Mammary epithelial cell (primary cell): ENCODE measurements at regions of chr4 and their contacts with region 1.

Region 1: DNA sequence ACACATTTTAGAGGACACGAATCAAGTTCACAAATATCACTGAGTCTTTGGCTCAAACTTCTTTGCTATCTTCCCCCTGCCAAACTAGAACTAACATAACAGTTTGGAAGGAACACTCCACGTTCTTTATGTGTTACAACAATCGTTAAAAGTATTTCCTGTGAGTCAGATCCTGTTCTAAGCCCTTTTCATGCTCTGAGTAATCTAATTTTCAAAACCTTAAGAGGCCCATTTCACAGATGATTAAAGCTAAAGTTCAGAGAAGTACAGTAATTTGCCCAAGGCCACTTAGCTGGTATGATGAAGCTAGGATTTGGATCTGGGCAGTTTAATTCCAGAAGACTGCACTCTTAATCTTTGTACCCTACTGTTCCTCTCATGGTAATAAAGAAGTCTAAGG is 854.4 kb upstream of the INTU start:
- DNase-seq: peak; percentile 60
- H3K4me3 ChIP-seq: peak overlapping the region in 2 of 3 experiments; percentile 45 to 60
- H3K27ac ChIP-seq: peak overlapping the region; percentile 83
- H3K4me1 ChIP-seq: peaks cover 5% of the 10 kb centered on the region
- H3K27me3 ChIP-seq: no peaks in the 10 kb centered on the region
- CTCF ChIP-seq: no peak

Region 2: GRCh38 chr4:126627255-126627654 is 151.1 kb before region 1 on chr4:
- CTCF ChIA-PET with region 1: no interaction called
- dilution Hi-C with region 1: no loop called
- in situ Hi-C with region 1: no loop called
- intact Hi-C with region 1: loop called (anchors 5 kb)
- DNase-seq: peak; percentile 12
- H3K4me3 ChIP-seq: no peak overlapping the region
- H3K27ac ChIP-seq: no peak overlapping the region
- H3K4me1 ChIP-seq: no peaks in the 10 kb centered on the region
- H3K27me3 ChIP-seq: no peaks in the 10 kb centered on the region
- CTCF ChIP-seq: peak; percentile 54 to 74

Region 3: GRCh38 chr4:126850286-126850685 is 71.9 kb after region 1 on chr4:
- CTCF ChIA-PET with region 1: no interaction called
- dilution Hi-C with region 1: no loop called
- in situ Hi-C with region 1: no loop called
- intact Hi-C with region 1: loop called (anchors 5 kb)
- DNase-seq: peak; percentile 97
- H3K4me3 ChIP-seq: no peak overlapping the region
- H3K27ac ChIP-seq: peak overlapping the region; percentile 28
- H3K4me1 ChIP-seq: peaks cover 21% of the 10 kb centered on the region
- H3K27me3 ChIP-seq: no peaks in the 10 kb centered on the region
- CTCF ChIP-seq: no peak

Region 4: GRCh38 chr4:126969360-126970235 is 191.2 kb after region 1 on chr4:
- CTCF ChIA-PET with region 1: no interaction called
- dilution Hi-C with region 1: no loop called
- in situ Hi-C with region 1: no loop called
- intact Hi-C with region 1: no loop called
- DNase-seq: no peak
- H3K4me3 ChIP-seq: no peak overlapping the region
- H3K27ac ChIP-seq: no peak overlapping the region
- H3K4me1 ChIP-seq: no peaks in the 10 kb centered on the region
- H3K27me3 ChIP-seq: no peaks in the 10 kb centered on the region
- CTCF ChIP-seq: no peak